Naive thymus-derived CD4-positive, alpha-beta T cell (primary cell): ENCODE measurements at regions of chr1 and their contacts with region 1.

Region 1: GRCh38 chr1:58996341-58997059 is 212.7 kb upstream of the JUN start:
- DNase-seq: no peak
- ATAC-seq: no peak
- H3K4me3 ChIP-seq: no peak overlapping the region
- H3K4me3 Mint-ChIP-seq: peak overlapping the region in 1 of 10 donors; percentile 28
- H3K27ac ChIP-seq: no peak overlapping the region
- H3K27ac Mint-ChIP-seq: peak overlapping the region in 1 of 9 donors; percentile 83
- H3K4me1 ChIP-seq: no peaks in the 10 kb centered on the region
- H3K4me1 Mint-ChIP-seq: peaks cover 0 to 33% (median 0%) of the 10 kb centered on the region in 7 donors
- H3K27me3 ChIP-seq: no peaks in the 10 kb centered on the region
- H3K27me3 Mint-ChIP-seq: no peaks in the 10 kb centered on the region

Region 2: DNA sequence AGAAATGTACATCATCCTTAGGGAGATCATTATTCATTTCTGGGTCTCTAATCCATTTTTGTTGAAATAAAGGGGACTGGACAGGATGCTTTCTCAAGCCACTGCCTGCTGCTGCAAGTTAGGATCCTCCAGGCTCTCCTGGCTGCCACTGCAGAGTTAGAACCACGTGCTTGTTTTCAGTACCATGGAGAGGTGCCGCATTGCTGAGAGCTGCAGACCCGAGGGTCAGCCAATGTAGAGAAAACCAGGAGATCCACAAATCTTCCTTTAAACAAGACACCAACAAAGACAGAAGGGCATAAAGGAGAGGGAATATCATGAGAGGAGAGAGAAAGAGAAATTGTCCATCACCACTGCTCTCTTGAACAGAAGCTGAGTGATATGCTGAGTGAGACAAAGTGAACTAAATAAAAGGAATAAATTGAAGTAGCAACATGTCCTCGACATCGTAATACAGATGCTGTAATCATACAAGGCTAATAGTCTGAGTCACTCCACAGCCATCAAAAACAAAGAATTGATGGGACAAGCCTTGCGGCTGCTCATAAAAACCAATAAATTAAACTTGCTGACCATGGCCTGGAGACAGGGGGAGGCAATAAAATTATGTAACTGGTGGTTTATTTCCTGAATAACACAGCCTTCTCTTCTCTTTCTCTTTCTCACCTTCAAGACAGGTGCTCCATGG is 705.7 kb before region 1 on chr1:
- CTCF ChIA-PET with region 1: no interaction called
- POLR2A ChIA-PET with region 1: no interaction called
- intact Hi-C with region 1: no loop called
- DNase-seq: peak in 1 of 9 donors; percentile 2
- ATAC-seq: no peak
- H3K4me3 ChIP-seq: no peak overlapping the region
- H3K4me3 Mint-ChIP-seq: no peak overlapping the region
- H3K27ac ChIP-seq: no peak overlapping the region
- H3K27ac Mint-ChIP-seq: no peak overlapping the region
- H3K4me1 ChIP-seq: no peaks in the 10 kb centered on the region
- H3K4me1 Mint-ChIP-seq: peaks cover 0 to 2% (median 0%) of the 10 kb centered on the region in 7 donors
- H3K27me3 ChIP-seq: no peaks in the 10 kb centered on the region
- H3K27me3 Mint-ChIP-seq: peaks cover 0 to 5% (median 0%) of the 10 kb centered on the region in 5 donors

Region 3: DNA sequence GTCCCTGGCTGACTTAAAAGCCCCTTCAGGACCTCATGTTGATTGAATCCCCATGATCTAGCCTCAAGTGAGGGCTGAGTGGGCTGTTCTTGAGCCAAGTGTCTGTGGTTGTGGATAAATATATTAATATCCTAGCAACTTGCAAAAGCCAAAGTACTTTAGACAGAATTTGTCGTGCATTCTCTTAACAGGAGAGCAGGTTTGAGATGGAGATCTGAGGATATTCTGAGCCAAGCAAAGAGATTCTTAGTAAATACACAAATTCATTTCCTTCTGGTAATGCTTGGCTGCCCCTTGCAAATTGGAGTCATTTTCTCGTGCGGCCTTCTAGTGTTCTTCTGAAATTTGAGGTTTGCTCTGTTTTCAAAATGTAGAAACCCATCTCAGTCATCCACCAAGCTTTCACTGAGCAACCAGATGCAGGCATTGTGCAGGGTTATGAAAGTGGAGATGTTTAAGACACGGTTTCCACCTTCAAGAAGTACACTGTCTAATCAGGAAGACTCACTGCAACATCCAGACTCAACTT is 29.5 kb after region 1 on chr1:
- CTCF ChIA-PET with region 1: no interaction called
- POLR2A ChIA-PET with region 1: no interaction called
- intact Hi-C with region 1: loop called in 1 of 2 experiments (anchors 5 kb)
- DNase-seq: no peak
- ATAC-seq: no peak
- H3K4me3 ChIP-seq: no peak overlapping the region
- H3K4me3 Mint-ChIP-seq: peak overlapping the region in 1 of 10 donors; percentile 31
- H3K27ac ChIP-seq: no peak overlapping the region
- H3K27ac Mint-ChIP-seq: peak overlapping the region in 1 of 9 donors; percentile 90
- H3K4me1 ChIP-seq: peaks cover 0 to 1% of the 10 kb centered on the region in 2 donors
- H3K4me1 Mint-ChIP-seq: peaks cover 2 to 35% (median 2%) of the 10 kb centered on the region in 7 donors
- H3K27me3 ChIP-seq: no peaks in the 10 kb centered on the region
- H3K27me3 Mint-ChIP-seq: no peaks in the 10 kb centered on the region